Activated B cell treated with CpG ODN at 0.5 μM for 24 hours (primary cell): ENCODE measurements at regions of chr20 and their contacts with region 1.

Region 1: DNA sequence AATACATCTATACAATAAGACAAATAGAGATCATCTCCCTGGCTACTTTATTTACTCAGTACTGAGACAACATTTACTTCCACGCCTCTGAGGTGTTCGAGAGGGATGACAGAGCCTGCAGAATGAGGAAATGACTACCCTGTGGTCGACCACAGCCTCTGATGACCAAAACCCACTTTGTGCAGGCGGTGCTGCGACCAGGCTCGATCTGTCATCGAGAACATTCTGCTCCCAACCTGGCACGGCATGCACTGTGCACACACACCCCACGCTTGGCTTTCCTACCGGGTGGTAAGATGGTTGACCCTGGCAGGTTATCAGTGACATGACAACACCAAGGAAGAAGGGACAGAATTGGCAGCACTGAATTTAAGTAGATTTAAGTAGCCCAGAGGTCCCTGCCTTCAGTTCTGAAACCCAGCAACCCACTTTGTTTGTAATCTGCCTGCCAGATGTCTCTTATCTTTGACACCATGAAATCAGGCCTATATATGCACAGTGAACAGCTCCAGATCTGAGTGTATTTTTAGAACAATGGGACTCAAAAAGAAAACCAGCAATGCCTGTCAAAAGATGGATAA is 42.6 kb downstream of the TTI1 start:
- DNase-seq: peak; percentile 29
- ATAC-seq: peak; percentile 87
- H3K4me3 Mint-ChIP-seq: no peak overlapping the region
- H3K27ac Mint-ChIP-seq: peak overlapping the region; percentile 13
- H3K4me1 Mint-ChIP-seq: peaks cover 20% of the 10 kb centered on the region
- H3K27me3 Mint-ChIP-seq: no peaks in the 10 kb centered on the region
- CTCF ChIP-seq: no peak

Region 2: GRCh38 chr20:37192137-37192854 is 798.4 kb before region 1 on chr20:
- CTCF ChIA-PET with region 1: interaction called, 5 read pairs
- POLR2A ChIA-PET with region 1: no interaction called
- intact Hi-C with region 1: loop called (anchors 5 kb)
- DNase-seq: peak; percentile 46
- ATAC-seq: peak; percentile 84
- H3K4me3 Mint-ChIP-seq: no peak overlapping the region
- H3K27ac Mint-ChIP-seq: no peak overlapping the region
- H3K4me1 Mint-ChIP-seq: peaks cover 57% of the 10 kb centered on the region
- H3K27me3 Mint-ChIP-seq: no peaks in the 10 kb centered on the region
- CTCF ChIP-seq: peak; percentile 54

Region 3: DNA sequence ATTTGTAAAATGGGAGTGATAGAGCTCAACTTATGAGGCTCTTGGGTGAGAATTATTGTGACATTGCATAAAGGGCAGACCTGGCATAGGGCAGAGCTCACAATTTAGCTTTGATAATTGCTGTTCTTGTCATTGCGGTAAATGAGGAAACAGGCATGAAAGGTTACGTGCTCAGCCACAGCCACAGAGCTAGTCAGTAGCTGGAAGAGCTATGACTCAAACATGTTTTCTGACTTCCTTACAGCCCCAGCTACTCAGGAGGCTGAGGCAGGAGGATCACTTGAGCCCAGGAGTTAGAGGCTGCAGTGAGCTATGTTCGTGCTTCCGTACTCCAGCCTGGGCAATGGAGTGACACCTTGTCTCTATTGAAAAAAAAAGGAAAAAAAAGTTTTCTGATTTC is 725.5 kb before region 1 on chr20:
- CTCF ChIA-PET with region 1: no interaction called
- POLR2A ChIA-PET with region 1: no interaction called
- intact Hi-C with region 1: loop called (anchors 5 kb)
- DNase-seq: no peak
- ATAC-seq: peak; percentile 89
- H3K4me3 Mint-ChIP-seq: no peak overlapping the region
- H3K27ac Mint-ChIP-seq: no peak overlapping the region
- H3K4me1 Mint-ChIP-seq: peaks cover 13% of the 10 kb centered on the region
- H3K27me3 Mint-ChIP-seq: peaks cover 5% of the 10 kb centered on the region
- CTCF ChIP-seq: no peak

Region 4: GRCh38 chr20:37564388-37565133 is 426.1 kb before region 1 on chr20:
- CTCF ChIA-PET with region 1: interaction called, 57 read pairs
- POLR2A ChIA-PET with region 1: no interaction called
- intact Hi-C with region 1: loop called (anchors 1 kb)
- DNase-seq: peak; percentile 58
- ATAC-seq: peak; percentile 77
- H3K4me3 Mint-ChIP-seq: no peak overlapping the region
- H3K27ac Mint-ChIP-seq: no peak overlapping the region
- H3K4me1 Mint-ChIP-seq: peaks cover 5% of the 10 kb centered on the region
- H3K27me3 Mint-ChIP-seq: peaks cover 32% of the 10 kb centered on the region
- CTCF ChIP-seq: peak; percentile 43

Region 5: DNA sequence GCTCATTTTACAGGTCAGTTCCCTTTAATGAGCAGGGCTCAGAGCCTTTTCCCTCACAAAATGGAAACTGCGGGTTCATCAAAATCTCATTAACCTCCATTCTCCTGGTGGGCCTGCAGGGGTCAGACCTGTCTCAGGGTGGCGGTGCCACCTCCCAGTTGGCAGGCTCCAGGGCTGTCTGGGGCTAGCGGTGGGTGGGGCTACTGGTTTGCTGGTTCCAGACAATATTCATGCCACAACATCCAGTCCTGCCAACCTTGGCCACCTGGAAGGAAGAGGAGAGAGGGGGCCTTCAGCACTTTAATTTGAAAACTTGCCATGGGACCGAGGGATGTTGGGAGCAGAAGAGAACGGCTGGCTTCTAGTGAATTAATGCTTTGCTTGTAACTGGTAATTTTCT is 338.7 kb before region 1 on chr20:
- CTCF ChIA-PET with region 1: interaction called, 4 read pairs
- POLR2A ChIA-PET with region 1: no interaction called
- intact Hi-C with region 1: loop called (anchors 1 kb)
- DNase-seq: no peak
- ATAC-seq: peak; percentile 75
- H3K4me3 Mint-ChIP-seq: no peak overlapping the region
- H3K27ac Mint-ChIP-seq: no peak overlapping the region
- H3K4me1 Mint-ChIP-seq: no peaks in the 10 kb centered on the region
- H3K27me3 Mint-ChIP-seq: peaks cover 12% of the 10 kb centered on the region
- CTCF ChIP-seq: no peak

Region 6: DNA sequence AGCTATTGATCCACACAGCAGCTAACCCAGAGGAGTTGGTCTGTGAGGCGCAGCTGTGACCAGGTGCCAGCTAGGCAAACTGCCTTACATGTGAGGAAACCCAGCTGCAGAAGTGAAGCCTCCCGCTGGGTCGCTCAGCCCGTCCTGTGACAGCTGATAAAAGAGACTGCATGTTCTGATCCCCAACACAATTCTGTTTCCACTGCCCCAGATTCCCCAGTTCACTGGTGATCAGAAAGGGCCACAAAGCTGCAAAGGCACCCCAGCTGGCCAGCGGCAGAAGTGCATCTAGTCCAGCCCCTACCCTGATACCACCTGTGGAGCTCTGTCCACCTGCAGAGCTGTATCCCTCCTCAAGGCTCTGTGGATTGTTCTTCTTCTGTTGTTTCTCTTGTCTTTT is 232.3 kb before region 1 on chr20:
- CTCF ChIA-PET with region 1: interaction called, 3 read pairs
- POLR2A ChIA-PET with region 1: interaction called, 3 read pairs
- intact Hi-C with region 1: loop called (anchors 2 kb)
- DNase-seq: no peak
- ATAC-seq: no peak
- H3K4me3 Mint-ChIP-seq: no peak overlapping the region
- H3K27ac Mint-ChIP-seq: no peak overlapping the region
- H3K4me1 Mint-ChIP-seq: peaks cover 20% of the 10 kb centered on the region
- H3K27me3 Mint-ChIP-seq: no peaks in the 10 kb centered on the region
- CTCF ChIP-seq: no peak

Region 7: GRCh38 chr20:37901654-37902503 is 88.8 kb before region 1 on chr20:
- CTCF ChIA-PET with region 1: no interaction called
- POLR2A ChIA-PET with region 1: no interaction called
- intact Hi-C with region 1: loop called (anchors 1 kb)
- DNase-seq: peak; percentile 19
- ATAC-seq: peak; percentile 45
- H3K4me3 Mint-ChIP-seq: peak overlapping the region; percentile 69
- H3K27ac Mint-ChIP-seq: no peak overlapping the region
- H3K4me1 Mint-ChIP-seq: peaks cover 12% of the 10 kb centered on the region
- H3K27me3 Mint-ChIP-seq: peaks cover 46% of the 10 kb centered on the region
- CTCF ChIP-seq: no peak